ENCODE measurements at regions of chr10 and their contacts with region 1.

Region 1: DNA sequence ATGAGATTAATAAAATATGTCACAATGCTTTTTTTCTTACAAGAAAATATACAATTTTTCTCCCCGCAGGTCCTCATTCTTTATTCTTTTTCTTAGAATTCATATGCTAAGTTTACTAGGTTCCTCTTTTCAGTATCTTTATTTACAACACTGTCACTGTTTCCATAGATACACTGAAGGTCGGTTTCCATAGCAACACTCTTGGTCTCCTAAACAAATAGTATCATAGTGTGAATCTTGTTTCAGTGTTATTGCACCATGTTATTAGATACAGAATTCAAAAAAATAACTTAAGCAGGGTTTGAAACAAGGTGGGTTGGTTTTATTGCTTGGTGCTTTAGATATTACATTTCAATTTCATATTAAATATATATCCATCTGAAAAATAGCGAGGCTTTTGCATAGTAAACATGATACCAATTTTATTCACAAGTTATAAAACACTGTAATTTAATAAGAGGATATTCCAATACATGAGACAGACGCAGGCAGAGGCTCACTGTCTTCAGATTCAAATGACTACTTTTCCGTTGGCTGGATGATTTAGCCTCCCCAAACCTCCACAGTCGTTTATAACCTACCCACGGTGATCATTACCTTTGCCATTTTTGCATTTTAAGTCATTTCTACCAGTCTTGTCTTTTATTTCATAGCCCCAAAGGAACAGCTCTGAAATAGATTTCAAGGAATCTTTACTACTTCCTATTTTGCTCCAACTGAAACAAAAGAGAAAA is 88.9 kb upstream of the KLF6 start:
- DNase-seq: peak in 4 of 9 experiments; percentile 7 to 91 (median 50)
- ATAC-seq: peak; percentile 55
- H3K4me3 ChIP-seq: no peak overlapping the region
- H3K4me3 Mint-ChIP-seq: no peak overlapping the region
- H3K27ac ChIP-seq: peak overlapping the region; percentile 26 to 95
- H3K27ac Mint-ChIP-seq: peak overlapping the region; percentile 88
- H3K4me1 ChIP-seq: peaks cover 25% of the 10 kb centered on the region
- H3K4me1 Mint-ChIP-seq: peaks cover 43% of the 10 kb centered on the region
- H3K27me3 ChIP-seq: no peaks in the 10 kb centered on the region
- H3K27me3 Mint-ChIP-seq: no peaks in the 10 kb centered on the region
- CTCF ChIP-seq: no peak

Region 2: GRCh38 chr10:3178042-3178441 is 695.9 kb before region 1 on chr10:
- CTCF ChIA-PET with region 1: no interaction called
- POLR2A ChIA-PET with region 1: no interaction called
- intact Hi-C with region 1: no loop called
- DNase-seq: no peak
- ATAC-seq: no peak
- H3K4me3 ChIP-seq: no peak overlapping the region
- H3K4me3 Mint-ChIP-seq: no peak overlapping the region
- H3K27ac ChIP-seq: no peak overlapping the region
- H3K27ac Mint-ChIP-seq: no peak overlapping the region
- H3K4me1 ChIP-seq: no peaks in the 10 kb centered on the region
- H3K4me1 Mint-ChIP-seq: peaks cover under 1% of the 10 kb centered on the region
- H3K27me3 ChIP-seq: no peaks in the 10 kb centered on the region
- H3K27me3 Mint-ChIP-seq: no peaks in the 10 kb centered on the region
- CTCF ChIP-seq: no peak

Region 3: DNA sequence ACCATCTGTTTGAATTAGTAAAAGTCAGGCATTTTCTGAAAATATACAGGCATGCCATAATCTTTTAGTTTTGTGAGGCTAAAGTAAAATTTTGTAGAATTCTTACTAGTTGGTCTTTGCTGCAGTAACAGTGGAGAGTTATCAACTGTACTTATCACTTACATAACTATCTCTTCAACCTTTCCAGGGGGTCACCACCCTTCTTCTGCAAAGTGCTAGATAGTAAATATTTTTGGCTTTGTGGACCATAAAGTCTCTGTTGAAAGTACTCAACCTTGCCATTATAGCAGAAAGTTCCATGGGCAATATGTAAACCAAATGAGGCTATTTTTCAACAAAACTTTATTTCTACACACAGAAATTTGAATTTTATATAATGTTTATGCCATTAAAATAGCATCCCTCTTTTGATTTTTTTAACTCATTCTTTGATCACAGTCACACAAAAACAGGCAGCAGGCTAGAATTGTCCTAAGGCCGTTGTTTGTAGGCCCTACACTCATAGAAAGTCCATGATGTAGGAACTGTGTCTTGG is 29.3 kb before region 1 on chr10:
- CTCF ChIA-PET with region 1: no interaction called
- POLR2A ChIA-PET with region 1: no interaction called
- intact Hi-C with region 1: loop called in 1 of 2 experiments (anchors 5 kb)
- DNase-seq: no peak
- ATAC-seq: no peak
- H3K4me3 ChIP-seq: no peak overlapping the region
- H3K4me3 Mint-ChIP-seq: no peak overlapping the region
- H3K27ac ChIP-seq: no peak overlapping the region
- H3K27ac Mint-ChIP-seq: no peak overlapping the region
- H3K4me1 ChIP-seq: no peaks in the 10 kb centered on the region
- H3K4me1 Mint-ChIP-seq: no peaks in the 10 kb centered on the region
- H3K27me3 ChIP-seq: no peaks in the 10 kb centered on the region
- H3K27me3 Mint-ChIP-seq: no peaks in the 10 kb centered on the region
- CTCF ChIP-seq: no peak

Region 4: DNA sequence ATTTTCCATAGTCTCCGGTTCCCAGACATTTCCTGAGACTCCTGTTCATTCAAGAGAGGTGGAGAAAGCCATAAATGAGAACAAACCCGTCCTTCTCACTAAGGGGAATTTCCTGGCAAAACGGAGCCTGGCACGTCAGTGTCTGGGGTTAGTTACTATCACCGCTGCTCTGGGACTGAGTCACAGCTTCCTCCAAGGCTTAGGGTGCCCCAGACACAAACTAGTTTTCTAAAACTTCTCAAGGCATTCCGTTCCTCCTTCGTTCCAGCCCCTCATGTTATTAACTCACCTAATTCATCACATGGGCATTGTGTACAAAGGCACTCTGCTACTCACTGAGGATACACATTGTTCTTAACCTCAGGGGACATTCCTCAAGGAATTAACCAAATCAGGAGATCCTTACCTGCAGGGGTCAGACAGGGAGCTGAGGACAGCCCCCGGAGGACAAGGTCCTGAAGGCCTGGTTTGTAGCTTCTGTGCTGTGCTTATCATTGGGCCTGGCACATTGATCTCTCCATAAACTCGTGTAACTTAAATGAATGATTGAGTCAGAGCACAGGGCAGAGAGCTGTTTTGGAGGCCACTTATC is 14.1 kb after region 1 on chr10:
- CTCF ChIA-PET with region 1: interaction called, 3 read pairs
- POLR2A ChIA-PET with region 1: interaction called, 4 read pairs
- intact Hi-C with region 1: loop called in 1 of 2 experiments (anchors 2 kb)
- DNase-seq: peak; percentile 26 to 93 (median 57)
- ATAC-seq: peak; percentile 69
- H3K4me3 ChIP-seq: peak overlapping the region in 1 of 2 experiments; percentile 21
- H3K4me3 Mint-ChIP-seq: peak overlapping the region; percentile 22
- H3K27ac ChIP-seq: peak overlapping the region in 1 of 2 experiments; percentile 72
- H3K27ac Mint-ChIP-seq: peak overlapping the region; percentile 81
- H3K4me1 ChIP-seq: peaks cover 12% of the 10 kb centered on the region
- H3K4me1 Mint-ChIP-seq: peaks cover 29% of the 10 kb centered on the region
- H3K27me3 ChIP-seq: no peaks in the 10 kb centered on the region
- H3K27me3 Mint-ChIP-seq: no peaks in the 10 kb centered on the region
- CTCF ChIP-seq: no peak